ENCODE measurements at regions of chr19 and their contacts with region 1.

Region 1: GRCh38 chr19:3505598-3506383 is at the start of gene FZR1:
- DNase-seq: peak; percentile 98 to 100
- H3K4me3 ChIP-seq: peak within 1 kb of the TSS; percentile 90 to 100
- H3K27ac ChIP-seq: peak within 1 kb of the TSS; percentile 70 to 80
- H3K4me1 ChIP-seq: peaks cover 5 to 12% of the 10 kb centered on the region in 2 donors
- H3K27me3 ChIP-seq: no peaks in the 10 kb centered on the region
- CTCF ChIP-seq: no peak
- total RNA-seq, gene FZR1: 56.8 TPM

Region 2: DNA sequence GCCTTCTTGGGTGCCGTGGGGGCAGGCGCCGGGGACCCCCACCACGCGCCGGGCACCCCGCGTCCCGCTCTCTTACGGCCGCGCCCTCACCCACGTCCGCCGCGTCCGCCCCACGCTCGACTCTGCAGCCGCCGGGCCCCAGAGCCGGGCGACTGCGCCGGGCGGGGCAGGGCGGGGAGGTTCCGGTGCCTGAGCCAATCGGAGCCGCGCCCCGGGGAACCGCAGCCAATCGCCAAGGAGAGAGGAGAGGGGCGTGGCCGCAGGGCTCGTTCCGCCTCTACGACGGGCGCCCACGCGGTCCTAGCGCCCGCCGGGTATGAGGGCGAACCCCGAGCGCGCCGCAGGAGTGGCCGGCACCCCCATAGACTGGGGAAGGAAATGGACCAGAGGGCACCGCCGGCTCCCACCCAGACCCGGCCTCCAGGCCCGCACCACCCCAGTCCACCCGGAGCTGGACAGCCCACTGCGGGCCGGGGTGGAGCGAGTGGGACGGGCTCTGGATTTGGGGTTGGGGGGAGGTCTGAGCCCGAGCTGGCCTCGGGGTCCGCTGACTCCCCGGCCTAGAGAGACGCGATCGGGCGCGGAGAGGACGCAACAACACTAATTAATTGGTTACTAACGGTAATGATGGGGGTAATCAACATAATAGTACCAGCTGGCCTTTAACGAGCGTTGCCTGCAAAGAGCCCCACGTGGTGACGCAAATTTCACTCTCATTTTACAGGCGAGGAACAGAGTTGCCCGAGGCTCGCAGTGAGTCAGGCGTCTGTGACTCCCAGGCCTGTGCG is 51.9 kb after region 1 on chr19 and contains the start of gene MFSD12:
- intact Hi-C with region 1: loop called (anchors 5 kb)
- DNase-seq: peak; percentile 70 to 96
- H3K4me3 ChIP-seq: peak within 1 kb of the TSS; percentile 63 to 90
- H3K27ac ChIP-seq: peak within 1 kb of the TSS; percentile 72 to 79
- H3K4me1 ChIP-seq: peaks cover 8 to 23% of the 10 kb centered on the region in 2 donors
- H3K27me3 ChIP-seq: no peaks in the 10 kb centered on the region
- CTCF ChIP-seq: no peak
- total RNA-seq, gene MFSD12: 133 TPM

Region 3: DNA sequence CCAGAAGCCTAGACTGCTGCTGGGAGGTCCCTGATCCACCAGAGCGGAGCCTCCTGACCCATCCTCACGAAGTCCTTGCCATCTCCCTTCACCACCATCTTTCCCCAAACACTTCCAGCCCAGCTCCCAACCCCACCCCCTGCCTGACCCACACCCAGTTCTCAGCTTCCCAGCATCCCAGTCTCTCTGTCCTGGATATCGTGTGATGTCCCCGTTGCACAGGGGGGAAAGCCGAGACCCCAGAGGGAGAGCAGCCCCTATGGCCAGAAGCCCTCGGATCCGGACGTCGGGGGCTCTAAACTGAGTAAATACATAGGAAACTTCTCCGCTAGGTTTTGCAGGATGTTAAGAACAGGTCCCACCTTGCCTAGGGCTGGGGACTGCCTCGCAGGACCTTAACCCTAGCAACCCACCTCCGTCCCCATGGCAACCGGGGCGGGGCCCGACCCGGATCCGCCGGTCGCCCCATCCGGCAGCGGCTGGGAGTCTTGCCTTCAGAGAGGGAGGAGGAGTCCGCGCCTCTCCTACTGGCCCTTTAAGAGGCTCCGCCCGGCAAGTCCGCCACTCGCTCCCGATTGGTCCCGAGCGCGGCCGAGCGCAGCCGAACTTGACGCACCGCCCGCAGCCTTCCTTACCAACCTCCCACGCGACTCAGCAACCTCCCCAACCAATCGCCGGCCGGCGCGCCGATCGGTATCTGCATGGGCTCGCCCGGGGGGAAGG is 66.5 kb after region 1 on chr19:
- intact Hi-C with region 1: loop called (anchors 5 kb)
- DNase-seq: peak; percentile 100
- H3K4me3 ChIP-seq: peak overlapping the region; percentile 89 to 92
- H3K27ac ChIP-seq: peak overlapping the region; percentile 15 to 38
- H3K4me1 ChIP-seq: peaks cover 8 to 21% of the 10 kb centered on the region in 2 donors
- H3K27me3 ChIP-seq: no peaks in the 10 kb centered on the region
- CTCF ChIP-seq: no peak

Region 4: GRCh38 chr19:3606690-3607289 is 101.0 kb after region 1 on chr19 and contains the start of gene TBXA2R:
- intact Hi-C with region 1: loop called (anchors 5 kb)
- DNase-seq: peak; percentile 35 to 91
- H3K4me3 ChIP-seq: peak within 1 kb of the TSS; percentile 74 to 96
- H3K27ac ChIP-seq: peak within 1 kb of the TSS; percentile 94 to 99
- H3K4me1 ChIP-seq: peaks cover 47 to 68% of the 10 kb centered on the region in 2 donors
- H3K27me3 ChIP-seq: no peaks in the 10 kb centered on the region
- CTCF ChIP-seq: no peak
- total RNA-seq, gene TBXA2R: 37.8 TPM

Region 5: DNA sequence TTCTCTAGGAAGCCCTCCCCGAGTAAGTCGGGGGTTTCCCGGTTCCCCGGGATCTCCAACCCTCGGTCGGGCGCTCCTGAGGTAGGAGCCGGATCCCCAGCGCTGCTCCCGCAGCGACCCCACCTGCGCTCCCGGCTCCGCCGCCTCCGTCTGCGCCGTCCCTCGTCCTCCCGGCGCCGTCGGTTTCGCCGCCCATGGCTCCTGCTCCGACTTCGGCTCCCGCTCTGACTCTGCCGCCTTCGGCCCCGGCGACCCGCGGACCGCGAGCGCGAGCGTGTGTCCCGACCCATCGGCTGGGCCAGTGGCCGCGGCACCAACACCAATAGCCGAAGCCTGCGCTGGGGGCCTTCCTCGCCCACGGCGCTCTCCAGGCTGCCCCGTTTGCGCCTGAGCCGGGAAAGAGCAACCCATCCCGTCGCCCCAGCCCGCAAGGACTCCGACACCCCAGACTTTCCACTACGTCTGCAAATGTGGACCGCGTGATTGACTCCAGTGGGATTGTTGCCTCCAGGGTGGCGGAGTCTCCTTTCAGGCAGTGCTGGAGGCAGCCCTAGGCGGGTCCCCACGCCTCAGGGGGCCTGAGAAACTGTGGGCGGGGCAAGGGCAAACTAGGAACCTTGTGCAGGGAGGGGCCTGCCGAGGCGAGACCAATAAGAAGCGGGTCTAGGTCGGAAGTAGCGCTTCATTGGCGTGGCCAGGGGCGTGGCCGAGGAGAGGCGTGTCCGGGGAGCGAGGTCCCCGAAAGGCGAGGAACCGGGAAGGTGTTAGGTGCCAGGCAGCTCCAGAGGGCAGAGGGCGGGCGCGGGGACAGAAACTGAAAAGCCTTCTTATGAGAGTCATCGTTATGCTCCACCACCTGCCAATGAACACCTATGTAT is 120.9 kb after region 1 on chr19 and contains the start of gene CACTIN:
- intact Hi-C with region 1: loop called (anchors 1 kb)
- DNase-seq: peak; percentile 94 to 99
- H3K4me3 ChIP-seq: peak within 1 kb of the TSS; percentile 74 to 94
- H3K27ac ChIP-seq: peak within 1 kb of the TSS; percentile 91 to 93
- H3K4me1 ChIP-seq: peaks cover 10 to 15% of the 10 kb centered on the region in 2 donors
- H3K27me3 ChIP-seq: no peaks in the 10 kb centered on the region
- CTCF ChIP-seq: no peak
- total RNA-seq, gene CACTIN: 57.6 TPM

Region 6: DNA sequence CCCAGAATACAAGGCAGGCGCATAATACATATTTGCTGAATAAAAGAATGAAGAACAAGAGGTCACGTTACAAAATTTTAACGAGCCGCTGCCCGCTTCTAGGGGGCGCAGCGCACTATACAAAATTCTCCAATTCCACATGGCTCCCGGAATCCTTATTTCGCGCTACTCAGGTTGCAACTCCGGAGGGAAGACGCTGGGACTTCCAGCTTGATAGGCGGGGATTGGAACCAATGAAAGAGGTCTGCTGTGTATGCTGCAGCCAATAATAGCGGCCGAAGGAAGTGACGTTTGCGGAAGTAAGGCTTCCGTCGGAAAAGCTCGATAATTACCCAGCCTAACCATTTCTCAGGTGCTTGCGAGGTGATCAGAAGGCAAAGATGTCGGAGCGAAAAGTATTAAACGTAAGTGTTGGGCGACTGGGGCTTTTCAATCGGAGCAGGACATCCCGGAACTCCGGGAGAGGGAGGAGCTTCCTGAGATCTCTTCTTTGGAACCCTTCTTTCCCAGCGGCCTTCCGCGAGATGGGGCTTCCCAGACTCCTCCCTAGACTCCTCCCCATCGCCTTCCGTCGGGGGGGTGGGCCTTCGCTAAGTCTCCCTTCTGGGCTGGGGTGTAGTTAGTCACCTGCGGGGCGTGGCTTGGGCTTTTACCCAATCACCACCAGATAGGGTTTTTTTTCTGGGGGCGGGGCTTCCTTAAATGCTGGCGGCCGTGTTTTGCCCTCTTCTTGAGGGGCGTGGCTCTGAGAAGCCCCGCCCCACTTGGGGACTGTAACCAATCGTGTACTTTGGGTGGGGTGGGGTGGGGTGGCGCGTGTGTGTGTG is 741.2 kb after region 1 on chr19 and contains the start of gene YJU2:
- intact Hi-C with region 1: loop called (anchors 10 kb)
- DNase-seq: peak; percentile 97 to 99
- H3K4me3 ChIP-seq: peak within 1 kb of the TSS; percentile 67 to 77
- H3K27ac ChIP-seq: peak within 1 kb of the TSS; percentile 90 to 96
- H3K4me1 ChIP-seq: peaks cover 0 to 4% of the 10 kb centered on the region in 2 donors
- H3K27me3 ChIP-seq: no peaks in the 10 kb centered on the region
- CTCF ChIP-seq: peak; percentile 39 to 52 (median 41)
- total RNA-seq, gene YJU2: 64.6 TPM

Measured in ascending aorta (tissue), 2 donors.